ENCODE measurements at regions of chr11 and their contacts with region 1.

Region 1: DNA sequence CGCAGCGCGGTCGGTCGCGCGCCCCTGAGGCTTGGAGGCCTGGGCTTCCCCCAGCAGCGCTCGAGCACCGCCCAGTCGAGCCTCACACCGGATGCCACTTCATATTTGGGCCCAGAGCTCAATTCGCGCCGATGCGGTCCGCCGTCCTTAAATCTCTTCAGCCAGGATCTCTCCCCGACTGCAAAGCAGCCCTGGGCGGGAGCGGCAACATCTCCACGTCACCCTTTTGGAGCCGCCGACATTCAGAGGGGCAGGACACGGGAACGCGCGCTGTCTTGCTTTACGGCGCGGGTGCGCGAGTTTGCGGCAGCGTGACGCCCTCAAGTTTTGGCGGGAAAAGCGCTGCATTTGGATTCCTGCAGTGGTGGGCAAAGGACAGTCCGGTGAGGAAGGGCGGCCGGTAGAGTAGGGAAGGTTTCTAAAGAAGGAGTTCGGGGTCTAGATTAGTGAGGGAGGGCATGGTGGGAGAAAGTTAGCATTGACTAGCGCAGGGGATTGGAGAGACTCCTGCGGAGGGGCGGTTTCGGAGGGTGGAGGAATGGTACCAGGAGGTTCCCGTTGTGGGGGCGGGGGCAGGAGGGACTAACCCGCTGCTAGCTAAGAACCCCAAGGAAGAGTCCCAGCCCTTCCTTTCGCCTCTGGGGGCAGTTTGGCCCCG is 796 bp downstream of the CHEK1 start:
- DNase-seq: peak; percentile 85
- ATAC-seq: peak; percentile 73
- H3K4me3 ChIP-seq: peak overlapping the region; percentile 72
- H3K27ac ChIP-seq: peak overlapping the region; percentile 95
- H3K4me1 ChIP-seq: peaks cover 8% of the 10 kb centered on the region
- H3K27me3 ChIP-seq: no peaks in the 10 kb centered on the region
- CTCF ChIP-seq: no peak
- POLR2A ChIP-seq: peak; percentile 78
- RAD21 ChIP-seq: no peak

Region 2: DNA sequence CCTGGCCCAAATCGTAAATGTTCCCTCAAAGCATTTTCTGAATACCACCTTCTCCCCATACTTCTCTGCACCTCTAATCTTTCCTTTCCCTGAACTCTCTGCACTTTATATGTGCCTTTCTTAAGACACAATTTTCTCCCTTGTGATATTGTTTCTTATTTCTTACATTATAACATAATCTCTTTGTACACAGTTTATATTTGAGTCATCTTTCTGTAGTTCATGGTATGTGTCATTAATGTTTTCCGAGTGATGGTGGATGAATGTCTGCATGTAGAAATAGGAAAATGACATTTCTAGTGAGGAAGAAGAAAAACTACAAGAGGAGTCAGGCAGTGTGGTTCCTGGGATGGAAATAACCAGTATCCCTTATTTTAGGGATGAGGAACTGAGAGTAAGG is 49.4 kb after region 1 on chr11:
- CTCF ChIA-PET with region 1: no interaction called
- POLR2A ChIA-PET with region 1: no interaction called
- dilution Hi-C with region 1: no loop called
- in situ Hi-C with region 1: no loop called
- intact Hi-C with region 1: loop called (anchors 2 kb)
- DNase-seq: peak; percentile 67
- ATAC-seq: peak; percentile 82
- H3K4me3 ChIP-seq: no peak overlapping the region
- H3K27ac ChIP-seq: peak overlapping the region; percentile 79; the same call in 1 of the 2 replicates
- H3K4me1 ChIP-seq: peaks cover 14% of the 10 kb centered on the region
- H3K27me3 ChIP-seq: no peaks in the 10 kb centered on the region
- CTCF ChIP-seq: no peak
- POLR2A ChIP-seq: no peak
- RAD21 ChIP-seq: no peak